Right ventricle myocardium inferior (tissue), 1 donor: ENCODE measurements at regions of chr18 and their contacts with region 1.

Region 1: GRCh38 chr18:55589625-55590291 is 1.8 kb upstream of the TCF4 start:
- DNase-seq: peak; percentile 99
- ATAC-seq: peak; percentile 98

Region 2: GRCh38 chr18:55322178-55322735 is 267.5 kb before region 1 on chr18:
- intact Hi-C with region 1: loop called (anchors 5 kb)
- DNase-seq: peak; percentile 88
- ATAC-seq: peak; percentile 88

Region 3: GRCh38 chr18:55401638-55402191 is 188.0 kb before region 1 on chr18:
- intact Hi-C with region 1: loop called (anchors 5 kb)
- DNase-seq: no peak
- ATAC-seq: peak; percentile 44

Region 4: GRCh38 chr18:55509631-55510324 is 80.0 kb before region 1 on chr18:
- intact Hi-C with region 1: loop called (anchors 2 kb)
- DNase-seq: no peak
- ATAC-seq: no peak

Region 5: GRCh38 chr18:55634545-55634944 is 44.8 kb after region 1 on chr18:
- intact Hi-C with region 1: no loop called
- DNase-seq: no peak
- ATAC-seq: no peak

Region 6: DNA sequence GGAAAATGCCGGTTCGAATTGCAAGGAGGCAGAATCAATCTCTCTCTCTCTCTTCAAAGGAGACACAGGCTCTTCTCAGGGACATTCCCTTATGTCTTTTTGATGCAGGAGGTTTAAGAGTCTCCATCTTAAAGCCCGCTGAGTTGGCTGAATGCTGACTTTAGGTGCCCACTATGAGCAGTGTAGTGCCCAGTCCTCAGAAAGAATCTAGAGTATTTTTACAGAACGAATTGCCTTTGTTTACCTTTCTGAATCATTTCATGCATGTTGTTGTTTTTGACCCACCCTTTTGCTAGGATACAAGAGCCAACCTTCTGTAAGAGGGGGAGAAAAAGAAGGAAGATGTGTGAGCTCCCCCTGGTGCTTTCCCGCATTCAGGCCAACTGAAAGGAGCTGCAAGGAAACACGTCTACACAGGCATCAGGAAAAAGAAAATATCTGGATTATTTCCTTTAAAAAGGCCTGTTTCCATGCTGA is 191.8 kb after region 1 on chr18:
- intact Hi-C with region 1: loop called (anchors 2 kb)
- DNase-seq: peak; percentile 50
- ATAC-seq: peak; percentile 57

Region 7: GRCh38 chr18:56575819-56576663 is 986.3 kb after region 1 on chr18:
- intact Hi-C with region 1: loop called (anchors 2 kb)
- DNase-seq: no peak
- ATAC-seq: peak; percentile 82